Activated B cell treated with CpG ODN at 0.5 μM for 24 hours (primary cell): ENCODE measurements at regions of chr2 and their contacts with region 1.

Region 1: DNA sequence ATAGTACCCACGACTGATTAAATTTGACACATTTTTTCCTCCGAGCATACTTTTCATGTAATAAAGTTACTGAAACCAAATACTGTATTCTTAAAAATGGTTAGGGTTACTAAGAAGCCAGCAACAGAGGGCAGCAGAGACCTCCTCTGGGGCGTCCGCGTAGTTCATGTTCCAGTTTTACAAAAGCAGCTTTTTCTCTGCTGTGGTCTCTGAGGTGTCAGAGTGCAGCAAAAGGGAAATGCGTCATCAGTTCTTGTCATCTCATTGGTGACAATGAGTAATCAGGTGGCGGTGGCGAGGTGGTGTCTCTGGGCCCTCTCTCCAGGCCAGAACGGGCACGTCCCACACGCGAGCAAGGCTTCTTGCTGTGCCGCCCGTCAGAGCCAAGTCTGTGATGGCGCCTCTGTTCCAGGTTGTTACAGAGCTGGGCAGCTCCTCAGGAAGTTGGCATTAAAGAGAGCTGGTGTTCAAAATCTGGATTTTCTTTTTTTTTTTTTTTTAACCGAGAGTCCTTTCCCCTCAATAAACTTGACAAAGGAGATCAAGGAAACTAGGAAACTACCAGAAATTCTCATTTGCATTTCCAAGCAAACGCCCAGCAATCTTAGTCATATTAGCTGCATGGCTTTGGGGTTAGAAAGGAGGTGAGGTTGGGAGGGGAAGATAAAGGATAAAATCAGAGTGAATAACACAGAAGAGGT is 98.6 kb upstream of the BZW1 start:
- DNase-seq: peak; percentile 68
- ATAC-seq: peak; percentile 99
- H3K4me3 Mint-ChIP-seq: peak overlapping the region; percentile 76
- H3K27ac Mint-ChIP-seq: peak overlapping the region; percentile 95
- H3K4me1 Mint-ChIP-seq: peaks cover 16% of the 10 kb centered on the region
- H3K27me3 Mint-ChIP-seq: peaks cover 2% of the 10 kb centered on the region
- CTCF ChIP-seq: no peak

Region 2: GRCh38 chr2:199911052-199911876 is 801.9 kb before region 1 on chr2 and contains the start of gene C2orf69:
- CTCF ChIA-PET with region 1: no interaction called
- POLR2A ChIA-PET with region 1: no interaction called
- intact Hi-C with region 1: loop called (anchors 5 kb)
- DNase-seq: peak; percentile 86
- ATAC-seq: peak; percentile 83
- H3K4me3 Mint-ChIP-seq: peak within 1 kb of the TSS; percentile 94
- H3K27ac Mint-ChIP-seq: peak within 1 kb of the TSS; percentile 94
- H3K4me1 Mint-ChIP-seq: peaks cover 35% of the 10 kb centered on the region
- H3K27me3 Mint-ChIP-seq: no peaks in the 10 kb centered on the region
- CTCF ChIP-seq: no peak
- total RNA-seq, gene C2orf69: 12.1 and 12.6 TPM in 2 replicates

Region 3: DNA sequence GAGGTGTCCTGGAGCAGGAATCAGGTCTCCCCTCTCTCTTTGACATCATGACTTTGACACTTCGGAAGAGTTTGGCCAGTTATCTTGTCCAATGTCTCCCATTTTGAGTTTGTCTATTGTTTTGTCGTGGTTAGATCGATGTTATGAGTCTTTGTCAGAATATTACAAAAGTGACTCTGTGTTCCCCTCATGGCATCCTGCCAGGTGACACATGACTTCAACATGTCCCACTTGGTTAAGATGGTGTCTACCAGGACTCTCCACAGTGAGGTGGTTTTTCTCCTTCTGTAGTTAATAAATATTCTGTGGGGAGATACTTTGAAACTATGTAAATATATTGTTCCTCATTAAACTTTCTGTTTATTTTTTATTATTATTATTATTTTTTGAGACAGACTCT is 21.9 kb after region 1 on chr2:
- CTCF ChIA-PET with region 1: interaction called, 5 read pairs
- POLR2A ChIA-PET with region 1: interaction called, 5 read pairs
- intact Hi-C with region 1: loop called (anchors 1 kb)
- DNase-seq: no peak
- ATAC-seq: no peak
- H3K4me3 Mint-ChIP-seq: no peak overlapping the region
- H3K27ac Mint-ChIP-seq: no peak overlapping the region
- H3K4me1 Mint-ChIP-seq: no peaks in the 10 kb centered on the region
- H3K27me3 Mint-ChIP-seq: peaks cover 14% of the 10 kb centered on the region
- CTCF ChIP-seq: no peak

Region 4: DNA sequence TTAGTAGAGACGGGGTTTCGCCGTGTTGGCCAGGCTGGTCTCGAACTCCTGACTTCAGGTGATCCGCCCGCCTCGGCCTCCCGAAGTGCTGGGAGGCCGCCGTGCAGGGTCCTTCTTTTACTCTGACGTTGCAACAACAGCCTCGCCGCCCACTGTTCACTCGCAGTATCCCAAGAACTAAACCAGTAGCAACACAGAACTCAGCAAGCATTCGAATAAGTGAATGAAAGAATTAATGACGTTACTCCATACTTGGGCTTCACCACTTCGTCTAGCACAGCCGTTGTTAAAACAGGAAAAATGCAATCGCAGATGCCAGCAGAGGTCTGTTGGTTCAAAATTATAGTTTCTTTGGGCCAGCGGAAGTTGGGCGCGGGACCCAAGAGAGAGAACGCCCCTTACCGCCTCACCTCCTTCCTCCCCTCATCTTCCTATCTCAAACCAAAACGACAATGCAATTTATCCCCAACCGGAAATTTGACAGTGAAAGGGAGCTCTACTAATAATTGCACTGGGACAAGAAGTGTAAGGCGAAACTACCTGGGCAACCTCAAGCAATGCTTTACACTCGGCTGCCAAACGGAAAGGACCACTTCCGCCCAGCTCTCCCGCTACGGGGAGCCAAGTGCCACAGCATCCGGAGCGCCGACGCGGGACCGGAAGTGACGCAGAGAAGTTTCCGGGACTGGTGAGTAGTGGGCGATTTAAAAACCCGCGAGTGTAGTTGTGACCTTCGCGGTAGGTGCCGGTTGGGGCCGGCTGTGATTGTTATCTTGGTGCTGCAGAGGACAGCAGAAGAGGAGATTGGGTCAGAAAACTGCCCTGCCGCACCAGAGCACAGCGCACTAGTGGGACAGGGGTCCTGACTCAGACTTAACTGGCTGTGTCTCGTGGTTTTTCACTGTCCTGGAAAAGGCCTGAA is 175.8 kb after region 1 on chr2 and contains the starts of genes NIF3L1 and PPIL3:
- CTCF ChIA-PET with region 1: interaction called, 9 read pairs
- POLR2A ChIA-PET with region 1: interaction called, 19 read pairs
- intact Hi-C with region 1: loop called (anchors 1 kb)
- DNase-seq: peak; percentile 90
- ATAC-seq: peak; percentile 80
- H3K4me3 Mint-ChIP-seq: peak within 1 kb of the TSS; percentile 99
- H3K27ac Mint-ChIP-seq: peak within 1 kb of the TSS; percentile 100
- H3K4me1 Mint-ChIP-seq: peaks cover 40% of the 10 kb centered on the region
- H3K27me3 Mint-ChIP-seq: no peaks in the 10 kb centered on the region
- CTCF ChIP-seq: no peak
- total RNA-seq, gene NIF3L1: 32.2 and 32.3 TPM in 2 replicates
- total RNA-seq, gene PPIL3: 43.5 and 52.5 TPM in 2 replicates

Region 5: DNA sequence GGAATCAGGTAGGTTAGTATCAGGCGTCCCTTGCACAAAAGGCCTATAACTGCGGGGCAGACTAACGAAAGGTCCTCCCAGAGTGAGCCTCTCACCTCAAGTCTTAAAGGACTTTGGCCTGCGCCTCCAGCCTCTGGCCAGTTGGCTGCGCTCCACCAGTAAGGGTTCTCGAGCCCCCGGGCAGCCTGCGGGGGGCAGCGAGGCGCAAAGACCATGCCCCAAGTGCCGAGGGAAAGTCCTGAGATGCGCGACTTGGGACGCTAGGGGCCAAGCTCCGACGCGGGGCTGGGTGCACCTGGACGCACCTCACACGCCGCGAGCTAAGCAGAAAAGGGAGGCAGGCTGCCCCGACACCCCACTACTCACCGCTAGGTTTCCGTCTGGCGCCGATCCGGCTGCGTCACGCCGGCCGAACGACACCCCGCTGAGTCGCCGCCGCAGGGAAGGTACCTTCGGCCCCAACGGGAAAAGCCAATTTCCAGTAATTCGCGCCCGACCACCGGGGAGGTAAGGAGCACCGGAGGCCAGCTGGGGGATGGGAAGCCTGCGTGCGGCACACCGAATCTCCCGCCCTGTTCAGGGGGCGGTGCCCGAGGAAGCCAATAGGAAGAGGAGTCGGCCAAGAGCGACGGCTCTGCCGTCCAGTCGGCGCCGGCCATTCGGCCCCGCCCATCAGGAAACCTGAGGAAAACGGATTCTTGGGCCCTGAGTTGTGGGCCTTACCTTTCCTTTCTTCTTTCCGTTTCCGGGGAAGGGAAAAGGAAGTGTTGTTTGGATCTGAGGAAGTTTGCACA is 250.2 kb after region 1 on chr2 and contains the start of gene ORC2:
- CTCF ChIA-PET with region 1: no interaction called
- POLR2A ChIA-PET with region 1: interaction called, 7 read pairs
- intact Hi-C with region 1: loop called (anchors 5 kb)
- DNase-seq: peak; percentile 94
- ATAC-seq: peak; percentile 93
- H3K4me3 Mint-ChIP-seq: peak within 1 kb of the TSS; percentile 97
- H3K27ac Mint-ChIP-seq: peak within 1 kb of the TSS; percentile 97
- H3K4me1 Mint-ChIP-seq: peaks cover 63% of the 10 kb centered on the region
- H3K27me3 Mint-ChIP-seq: no peaks in the 10 kb centered on the region
- CTCF ChIP-seq: no peak
- total RNA-seq, gene ORC2: 36.8 and 38.1 TPM in 2 replicates

Region 6: GRCh38 chr2:201780674-201781581 is 1067.8 kb after region 1 on chr2 and contains the start of gene ALS2:
- CTCF ChIA-PET with region 1: interaction called, 3 read pairs
- POLR2A ChIA-PET with region 1: no interaction called
- intact Hi-C with region 1: loop called (anchors 2 kb)
- DNase-seq: peak; percentile 95
- ATAC-seq: peak; percentile 90
- H3K4me3 Mint-ChIP-seq: peak within 1 kb of the TSS; percentile 96
- H3K27ac Mint-ChIP-seq: peak within 1 kb of the TSS; percentile 95
- H3K4me1 Mint-ChIP-seq: peaks cover 17% of the 10 kb centered on the region
- H3K27me3 Mint-ChIP-seq: peaks cover 8% of the 10 kb centered on the region
- CTCF ChIP-seq: no peak
- total RNA-seq, gene ALS2: 11.6 and 14.2 TPM in 2 replicates